ENCODE measurements at regions of chr4 and their contacts with region 1.

Region 1: GRCh38 chr4:77862478-77863216 is at the start of gene MRPL1:
- DNase-seq: peak; percentile 77
- H3K4me3 ChIP-seq: peak within 1 kb of the TSS; percentile 65
- H3K27me3 ChIP-seq: no peaks in the 10 kb centered on the region
- CTCF ChIP-seq: no peak
- polyA plus RNA-seq, gene MRPL1: 8.3 and 22.5 TPM in 2 replicates

Region 2: DNA sequence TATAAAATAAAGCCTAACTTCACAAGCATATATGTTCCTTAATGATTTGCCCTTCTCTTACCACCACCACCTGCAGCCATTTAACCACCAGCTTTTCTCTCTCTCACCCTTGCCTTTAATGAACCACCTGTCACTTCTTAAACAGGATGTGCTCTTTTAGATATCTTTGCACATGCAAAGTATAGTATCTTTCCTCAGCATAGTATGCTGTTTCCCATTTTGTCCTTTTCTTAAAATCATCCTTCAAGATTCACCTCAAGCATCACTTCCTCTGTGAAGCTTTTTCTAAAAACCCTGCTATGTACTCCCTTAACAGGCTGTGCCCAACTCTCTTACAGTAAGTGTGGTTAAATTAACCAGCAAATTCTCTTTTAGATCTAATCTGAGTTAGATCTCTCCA is 35.3 kb before region 1 on chr4:
- CTCF ChIA-PET with region 1: interaction called, 4 read pairs
- POLR2A ChIA-PET with region 1: interaction called, 13 read pairs
- DNase-seq: no peak
- H3K4me3 ChIP-seq: no peak overlapping the region
- H3K27me3 ChIP-seq: peaks cover 3% of the 10 kb centered on the region; the same call in 1 of the 2 replicates
- CTCF ChIP-seq: no peak

Region 3: DNA sequence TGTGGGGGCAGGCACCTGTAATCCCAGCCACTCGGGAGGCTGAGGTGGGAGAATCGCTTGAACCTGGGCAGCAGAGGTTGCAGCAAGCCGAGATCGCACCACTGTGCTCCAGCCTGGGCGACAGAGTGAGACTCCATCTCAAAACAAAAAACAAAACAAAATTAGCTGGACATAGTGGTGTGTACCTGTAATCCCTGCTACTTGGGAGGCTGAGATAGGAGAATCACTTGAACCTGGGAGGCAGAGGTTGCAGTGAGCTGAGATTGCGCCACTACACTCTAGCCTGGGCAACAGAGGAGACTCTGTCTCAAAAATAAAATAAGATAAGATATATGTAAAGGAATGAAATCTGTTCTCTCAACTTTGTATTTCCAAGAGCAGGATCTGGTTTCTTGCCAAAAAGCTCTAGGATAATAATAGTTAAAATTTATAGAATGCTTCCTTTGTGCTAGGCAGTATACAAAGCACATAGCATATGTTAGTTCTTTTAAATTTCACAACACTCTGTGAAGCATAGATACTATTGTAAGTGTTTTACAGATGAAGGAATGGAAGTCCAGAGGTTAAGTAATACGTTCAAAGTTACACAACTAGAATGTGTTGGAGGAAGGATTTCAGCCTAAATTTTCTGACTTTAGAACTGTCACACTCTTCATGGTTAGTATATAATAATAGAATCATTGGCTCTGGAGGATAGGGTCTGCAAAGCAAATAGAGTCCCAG is 10.2 kb after region 1 on chr4:
- CTCF ChIA-PET with region 1: no interaction called
- POLR2A ChIA-PET with region 1: no interaction called
- DNase-seq: no peak
- H3K4me3 ChIP-seq: no peak overlapping the region
- H3K27me3 ChIP-seq: no peaks in the 10 kb centered on the region
- CTCF ChIP-seq: no peak

Region 4: DNA sequence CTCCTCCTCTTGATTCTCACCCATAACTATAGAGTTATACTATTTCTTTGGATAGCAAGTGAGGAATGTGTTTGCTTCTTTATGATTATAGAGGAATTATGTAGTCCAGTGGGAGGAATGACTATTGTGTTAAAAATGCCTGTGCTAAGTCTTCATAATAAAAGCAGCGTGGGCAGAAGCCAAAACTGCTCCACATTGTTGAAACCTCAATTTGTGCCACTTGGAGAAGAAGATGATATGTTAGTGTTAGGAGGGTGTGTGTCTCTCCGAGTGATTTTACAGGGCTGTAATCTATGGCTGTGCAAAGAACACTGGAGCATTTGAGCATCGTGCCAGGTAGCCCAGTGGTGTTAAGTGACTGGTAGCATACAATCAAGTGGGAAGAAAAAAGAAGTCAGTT is 268.8 kb after region 1 on chr4:
- CTCF ChIA-PET with region 1: no interaction called
- POLR2A ChIA-PET with region 1: no interaction called
- DNase-seq: peak; percentile 38
- H3K4me3 ChIP-seq: no peak overlapping the region
- H3K27me3 ChIP-seq: no peaks in the 10 kb centered on the region
- CTCF ChIP-seq: no peak

Measured in BJ (cell line).